Posterior vena cava (tissue), 2 donors: ENCODE measurements at regions of chr14 and their contacts with region 1.

Region 1: DNA sequence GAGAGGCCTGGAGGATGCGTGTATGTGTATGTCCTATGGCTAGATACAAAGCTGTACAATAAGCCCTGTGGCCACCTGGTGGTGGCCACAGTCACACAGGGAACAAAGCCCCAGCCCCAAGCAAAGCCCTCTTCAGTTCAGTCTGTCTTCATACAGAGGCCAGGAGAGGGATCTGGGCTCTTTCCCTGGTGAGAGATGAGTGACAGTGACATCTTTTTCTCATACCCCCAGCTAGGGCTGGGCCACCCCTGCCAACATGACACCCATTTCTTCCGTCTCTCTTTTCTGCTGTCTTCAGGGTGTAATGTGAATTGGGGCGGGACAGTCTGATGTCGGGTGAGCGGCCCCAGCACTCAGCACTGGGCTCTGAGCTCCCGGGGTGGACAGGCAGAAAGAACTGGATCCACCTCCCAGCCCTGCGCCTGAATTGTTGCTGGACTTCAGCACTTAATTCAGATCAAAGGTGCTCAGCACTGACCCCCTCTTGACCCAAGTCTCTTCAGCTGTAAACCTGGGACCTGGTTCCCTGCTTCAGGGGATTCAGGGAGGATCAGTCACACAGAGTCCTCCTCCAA is 59.8 kb downstream of the SERPINA3 start:
- DNase-seq: no peak

Region 2: DNA sequence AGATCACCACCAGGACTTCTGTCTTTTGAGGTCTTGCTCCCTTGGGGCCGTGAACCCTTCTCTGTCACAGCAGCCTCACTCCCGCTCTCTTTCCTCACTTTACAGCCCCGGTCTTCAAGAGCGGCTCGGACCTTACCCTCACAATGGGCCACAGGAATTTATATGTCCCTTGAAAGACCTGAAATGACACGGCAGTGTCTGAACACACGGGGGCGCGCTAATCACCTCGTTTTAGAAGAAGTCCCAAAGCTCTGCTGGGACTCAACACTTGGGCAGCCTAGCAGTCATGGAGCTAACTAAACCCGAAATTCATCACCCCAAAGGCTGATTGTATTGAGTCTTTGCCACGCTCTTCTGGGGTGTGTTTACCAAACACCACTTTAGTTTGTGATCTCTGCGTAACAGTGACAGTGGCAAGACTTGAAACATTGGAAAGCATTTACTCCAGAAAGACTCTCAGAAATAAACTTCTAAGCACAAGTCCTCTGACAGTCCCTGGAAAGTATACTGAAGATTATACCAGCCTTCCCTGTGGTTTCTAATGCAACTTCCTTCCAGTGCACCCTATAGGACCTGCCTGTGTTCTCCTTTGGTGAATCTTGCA is 248.4 kb before region 1 on chr14:
- intact Hi-C with region 1: loop called in 1 of 2 experiments (anchors 10 kb)
- DNase-seq: peak; percentile 91